ENCODE measurements at regions of chr12 and their contacts with region 1.

Region 1: GRCh38 chr12:6376079-6376869 is 911 bp upstream of the SCNN1A start:
- DNase-seq: peak in 3 of 14 experiments; percentile 21 to 49 (median 38)
- ATAC-seq: peak; percentile 56
- H3K4me3 ChIP-seq: peak overlapping the region; percentile 21
- H3K4me3 Mint-ChIP-seq: peak overlapping the region; percentile 60
- H3K27ac ChIP-seq: no peak overlapping the region
- H3K27ac Mint-ChIP-seq: peak overlapping the region; percentile 58
- H3K4me1 ChIP-seq: peaks cover 51% of the 10 kb centered on the region
- H3K4me1 Mint-ChIP-seq: peaks cover 31% of the 10 kb centered on the region
- H3K27me3 ChIP-seq: no peaks in the 10 kb centered on the region
- H3K27me3 Mint-ChIP-seq: peaks cover 6% of the 10 kb centered on the region
- CTCF ChIP-seq: no peak

Region 2: GRCh38 chr12:6416596-6416995 is 40.3 kb after region 1 on chr12:
- CTCF ChIA-PET with region 1: no interaction called
- POLR2A ChIA-PET with region 1: no interaction called
- intact Hi-C with region 1: loop called in 1 of 2 experiments (anchors 5 kb)
- DNase-seq: peak in 2 of 14 experiments; percentile 33 to 38
- ATAC-seq: no peak
- H3K4me3 ChIP-seq: no peak overlapping the region
- H3K4me3 Mint-ChIP-seq: no peak overlapping the region
- H3K27ac ChIP-seq: no peak overlapping the region
- H3K27ac Mint-ChIP-seq: no peak overlapping the region
- H3K4me1 ChIP-seq: no peaks in the 10 kb centered on the region
- H3K4me1 Mint-ChIP-seq: no peaks in the 10 kb centered on the region
- H3K27me3 ChIP-seq: no peaks in the 10 kb centered on the region
- H3K27me3 Mint-ChIP-seq: no peaks in the 10 kb centered on the region
- CTCF ChIP-seq: no peak

Measured in CD4-positive, alpha-beta T cell (primary cell).